ENCODE measurements at regions of chr10 and their contacts with region 1.

Region 1: GRCh38 chr10:101012525-101013364 is 13.1 kb downstream of the LZTS2 start:
- DNase-seq: peak; percentile 89 to 92
- ATAC-seq: peak; percentile 85 to 91 (median 88)
- H3K4me3 ChIP-seq: no peak overlapping the region
- H3K27ac ChIP-seq: peak overlapping the region; percentile 66
- H3K4me1 ChIP-seq: peaks cover 6% of the 10 kb centered on the region
- H3K27me3 ChIP-seq: peaks cover 0 to 2% (median 0%) of the 10 kb centered on the region in 3 donors
- CTCF ChIP-seq: peak; percentile 81

Region 2: DNA sequence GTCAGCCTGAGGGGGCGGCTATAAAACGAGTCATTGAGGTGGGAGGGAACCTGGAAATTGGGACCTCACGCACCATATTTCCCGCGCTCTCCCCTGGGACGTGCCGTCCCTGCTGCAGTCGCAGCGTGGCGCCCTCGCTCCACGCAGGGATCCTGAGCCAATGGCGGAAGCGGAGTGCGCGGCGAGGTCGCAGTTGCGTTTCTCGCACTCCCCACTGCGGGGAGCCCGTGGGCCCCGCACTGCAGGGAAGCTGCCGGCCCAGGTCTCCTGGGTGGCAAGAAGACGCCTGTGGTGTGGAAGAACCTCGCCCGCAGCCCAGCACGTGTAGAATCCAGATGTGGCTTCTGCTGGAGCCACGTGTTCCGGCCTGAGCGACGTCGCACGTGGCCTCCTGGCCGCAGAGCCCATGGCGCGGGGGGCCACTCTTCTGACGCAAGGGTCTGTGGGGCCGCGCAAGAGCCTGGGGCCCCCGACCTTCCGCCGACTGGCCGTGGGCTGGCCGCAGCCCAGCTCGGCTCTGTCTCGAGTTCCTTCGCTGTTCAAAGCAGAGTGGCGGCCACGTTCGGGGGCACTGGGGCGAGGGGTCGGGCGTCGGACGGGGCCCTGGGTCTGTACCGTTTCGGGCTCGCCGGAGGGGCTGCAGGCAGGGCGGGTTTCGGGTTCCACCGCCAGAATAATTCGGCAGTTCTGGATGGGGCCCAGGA is 450.6 kb before region 1 on chr10:
- intact Hi-C with region 1: loop called in 1 of 2 experiments (anchors 10 kb)
- DNase-seq: peak; percentile 64 to 78
- ATAC-seq: peak; percentile 87 to 94 (median 91)
- H3K4me3 ChIP-seq: peak overlapping the region; percentile 28
- H3K27ac ChIP-seq: no peak overlapping the region
- H3K4me1 ChIP-seq: peaks cover 11% of the 10 kb centered on the region
- H3K27me3 ChIP-seq: peaks cover 0 to 54% (median 26%) of the 10 kb centered on the region in 3 donors
- CTCF ChIP-seq: peak; percentile 72

Region 3: DNA sequence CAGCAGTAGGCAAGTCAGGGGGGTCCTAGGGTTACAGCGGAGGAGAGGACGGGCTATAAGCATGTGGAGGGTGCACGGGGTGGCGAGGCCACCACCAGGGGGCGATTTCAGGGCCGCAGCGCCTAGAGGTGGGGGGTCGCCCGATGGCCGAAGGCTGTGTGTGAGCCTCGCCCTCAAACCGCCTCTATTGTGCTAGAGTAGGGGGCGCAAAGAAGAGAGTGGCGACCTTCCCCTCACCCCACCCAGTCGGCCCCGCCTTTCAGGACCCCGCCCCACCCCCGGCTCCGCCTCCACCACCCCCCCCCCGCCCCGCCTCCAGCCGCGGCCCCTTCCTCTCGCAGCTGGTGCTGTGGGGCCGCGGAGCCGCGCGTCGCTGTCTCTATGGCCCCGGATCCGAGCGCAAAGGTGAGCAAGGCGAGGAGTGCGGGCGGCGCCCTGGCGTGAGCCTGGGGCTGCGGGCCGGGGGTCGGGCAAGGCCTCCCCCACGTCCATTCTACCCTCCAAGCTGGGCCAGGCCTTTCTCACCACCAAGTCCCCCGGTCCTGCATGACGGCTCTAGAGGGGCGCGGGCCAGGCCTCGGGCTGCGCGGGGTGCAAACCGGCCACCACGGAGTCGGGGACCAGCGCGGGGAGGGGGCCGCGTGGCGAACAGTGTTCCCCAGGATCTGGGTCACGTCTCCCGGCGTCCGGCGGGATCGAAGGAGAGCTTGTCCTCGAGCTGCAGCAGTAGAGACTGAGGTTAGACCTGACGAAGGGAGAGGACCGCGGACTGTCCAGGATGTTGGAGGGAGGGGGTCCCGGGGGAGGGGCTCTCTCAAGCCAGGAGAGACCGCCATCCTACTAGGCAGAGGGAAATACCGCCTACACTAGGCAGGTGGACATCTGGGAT is 43.3 kb before region 1 on chr10 and contains the start of gene SEMA4G:
- intact Hi-C with region 1: loop called (anchors 2 to 10 kb)
- DNase-seq: peak; percentile 50 to 69
- ATAC-seq: peak; percentile 80 to 91 (median 85)
- H3K4me3 ChIP-seq: peak within 1 kb of the TSS; percentile 71
- H3K27ac ChIP-seq: no peak within 1 kb of the TSS
- H3K4me1 ChIP-seq: peaks cover 6% of the 10 kb centered on the region
- H3K27me3 ChIP-seq: no peaks in the 10 kb centered on the region
- CTCF ChIP-seq: peak; percentile 65
- total RNA-seq, gene SEMA4G: 0.74 to 1.4 (median 0.89) TPM

Region 4: GRCh38 chr10:100993986-100994708 is 18.6 kb before region 1 on chr10:
- intact Hi-C with region 1: loop called (anchors 1 to 2 kb)
- DNase-seq: no peak
- ATAC-seq: no peak
- H3K4me3 ChIP-seq: no peak overlapping the region
- H3K27ac ChIP-seq: no peak overlapping the region
- H3K4me1 ChIP-seq: peaks cover 16% of the 10 kb centered on the region
- H3K27me3 ChIP-seq: no peaks in the 10 kb centered on the region
- CTCF ChIP-seq: peak; percentile 74

Region 5: GRCh38 chr10:101103430-101103829 is 90.7 kb after region 1 on chr10:
- intact Hi-C with region 1: no loop called
- DNase-seq: no peak
- ATAC-seq: no peak
- H3K4me3 ChIP-seq: no peak overlapping the region
- H3K27ac ChIP-seq: no peak overlapping the region
- H3K4me1 ChIP-seq: no peaks in the 10 kb centered on the region
- H3K27me3 ChIP-seq: peaks cover 0 to 41% (median 3%) of the 10 kb centered on the region in 3 donors
- CTCF ChIP-seq: no peak

Measured in psoas muscle (tissue), 8 donors.